ENCODE measurements at regions of chr17 and their contacts with region 1.

Region 1: DNA sequence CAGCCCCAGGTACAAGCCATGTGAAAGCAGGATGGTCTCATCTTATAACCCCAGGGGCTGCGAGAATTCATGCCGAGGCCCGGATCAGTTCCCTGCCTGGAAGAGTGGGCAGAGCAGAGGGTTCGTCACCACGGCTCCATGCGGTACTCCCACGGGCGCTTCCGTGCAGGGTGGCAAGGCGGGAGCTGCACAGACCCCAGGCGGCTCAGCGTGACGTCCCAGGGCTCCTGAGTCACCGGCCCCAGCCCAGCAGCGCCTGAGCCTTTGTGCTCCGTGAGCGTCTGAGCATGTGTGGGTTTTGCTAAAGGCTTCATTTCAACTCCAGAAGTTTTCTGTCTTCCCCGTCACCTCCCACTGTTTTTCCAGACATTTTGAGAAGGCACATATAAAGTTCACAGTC is 71.2 kb upstream of the CHMP6 start:
- DNase-seq: no peak
- ATAC-seq: no peak
- H3K4me3 ChIP-seq: no peak overlapping the region
- H3K27ac ChIP-seq: no peak overlapping the region
- H3K4me1 ChIP-seq: no peaks in the 10 kb centered on the region
- H3K27me3 ChIP-seq: no peaks in the 10 kb centered on the region
- CTCF ChIP-seq: no peak

Region 2: DNA sequence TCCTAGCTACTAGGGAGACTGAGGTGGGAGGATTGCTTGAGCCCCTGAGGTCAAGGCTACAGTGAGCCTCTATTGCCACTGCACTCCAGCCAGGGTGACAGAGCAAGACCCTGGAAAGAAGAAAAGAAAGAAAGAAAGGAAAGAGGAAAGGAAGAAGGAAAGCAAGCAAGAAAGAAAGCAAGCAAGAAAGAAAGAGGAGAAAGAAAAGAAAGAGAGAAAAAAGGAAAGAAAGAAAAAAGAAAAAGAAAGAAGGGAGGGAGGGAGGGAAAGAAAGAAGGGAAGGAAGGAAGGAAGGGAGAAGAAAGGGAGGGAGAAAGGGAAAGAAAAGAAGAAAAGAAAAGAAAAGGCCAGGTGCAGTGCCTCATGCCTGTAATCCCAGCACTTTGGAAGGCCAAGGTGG is 583.2 kb after region 1 on chr17:
- CTCF ChIA-PET with region 1: no interaction called
- POLR2A ChIA-PET with region 1: interaction called, 11 read pairs
- in situ Hi-C with region 1: no loop called
- intact Hi-C with region 1: no loop called
- DNase-seq: no peak
- ATAC-seq: no peak
- H3K4me3 ChIP-seq: no peak overlapping the region
- H3K27ac ChIP-seq: no peak overlapping the region
- H3K4me1 ChIP-seq: peaks cover 8% of the 10 kb centered on the region
- H3K27me3 ChIP-seq: no peaks in the 10 kb centered on the region
- CTCF ChIP-seq: no peak